Activated CD4-positive, alpha-beta memory T cell treated with anti-CD3 and anti-CD28 coated beads, Interleukin-2, amount 10 ng/mL, durations not matched to agents 7 days and 5 days (primary cell): ENCODE measurements at regions of chr1 and their contacts with region 1.

Region 1: DNA sequence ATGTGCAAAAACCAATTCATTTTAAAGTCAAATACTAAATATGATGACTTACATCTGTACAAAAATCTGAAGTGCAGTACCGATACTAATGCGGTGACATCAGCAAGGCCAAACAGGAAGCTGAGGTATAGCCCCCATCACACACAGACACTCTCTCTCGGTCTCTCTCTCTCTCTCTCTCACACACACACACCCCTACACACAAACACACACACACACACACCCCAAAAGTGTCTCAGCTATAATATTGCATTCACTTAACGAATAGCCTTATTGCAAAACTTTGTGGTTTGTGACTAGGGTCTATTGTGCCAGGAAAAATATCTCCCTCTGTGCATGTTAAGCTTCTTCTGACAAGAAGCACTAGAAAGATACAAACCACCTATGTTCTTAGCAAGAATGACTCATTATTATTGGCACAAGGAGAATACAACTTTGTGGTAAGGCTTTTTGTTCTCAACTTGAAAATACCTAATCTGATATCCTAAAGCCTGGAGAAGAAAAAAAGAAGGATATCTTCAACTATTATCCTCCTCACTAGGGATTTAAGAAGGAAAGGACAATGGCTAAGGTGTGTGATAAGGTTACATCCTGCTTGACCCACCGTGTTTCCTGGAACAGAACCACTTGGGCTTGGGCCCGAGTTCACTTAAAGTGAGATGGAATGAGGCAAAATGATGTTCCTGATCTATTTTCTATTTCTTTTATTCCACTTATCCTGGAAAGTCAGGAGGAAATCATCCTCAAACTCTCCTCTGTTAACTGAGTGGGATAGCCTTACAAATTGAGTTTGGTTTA is 107.1 kb downstream of the NIBAN1 start:
- DNase-seq: peak; percentile 76
- H3K4me3 Mint-ChIP-seq: peak overlapping the region; percentile 16
- H3K27ac Mint-ChIP-seq: peak overlapping the region; percentile 85
- H3K4me1 Mint-ChIP-seq: peaks cover 66% of the 10 kb centered on the region
- H3K27me3 Mint-ChIP-seq: no peaks in the 10 kb centered on the region

Region 2: GRCh38 chr1:184457500-184457899 is 409.7 kb before region 1 on chr1:
- CTCF ChIA-PET with region 1: no interaction called
- POLR2A ChIA-PET with region 1: no interaction called
- DNase-seq: no peak
- H3K4me3 Mint-ChIP-seq: no peak overlapping the region
- H3K27ac Mint-ChIP-seq: no peak overlapping the region
- H3K4me1 Mint-ChIP-seq: no peaks in the 10 kb centered on the region
- H3K27me3 Mint-ChIP-seq: peaks cover 10% of the 10 kb centered on the region

Region 3: GRCh38 chr1:184843732-184844495 is 23.3 kb before region 1 on chr1:
- CTCF ChIA-PET with region 1: interaction called, 3 read pairs
- POLR2A ChIA-PET with region 1: interaction called, 19 read pairs
- DNase-seq: peak; percentile 83
- H3K4me3 Mint-ChIP-seq: no peak overlapping the region
- H3K27ac Mint-ChIP-seq: peak overlapping the region; percentile 62
- H3K4me1 Mint-ChIP-seq: peaks cover 49% of the 10 kb centered on the region
- H3K27me3 Mint-ChIP-seq: no peaks in the 10 kb centered on the region

Region 4: DNA sequence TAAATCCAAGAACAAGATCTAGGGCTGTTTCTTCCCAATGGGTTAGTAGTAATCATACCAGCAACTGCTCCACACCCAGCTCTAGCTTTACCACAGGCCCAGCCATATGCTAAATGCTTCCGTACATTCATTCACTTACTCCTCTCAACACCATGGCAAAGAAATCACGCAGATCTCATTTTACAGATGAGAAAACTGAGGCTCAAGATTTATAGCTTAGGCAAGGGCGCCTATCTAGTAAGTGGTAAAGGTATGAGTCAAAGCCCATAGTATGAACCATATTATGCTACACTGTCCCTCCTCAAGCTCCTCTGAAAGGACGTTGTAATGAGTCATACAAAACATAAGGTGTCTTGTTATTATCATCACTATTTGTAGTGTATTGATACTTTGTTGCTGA is 24.9 kb after region 1 on chr1:
- CTCF ChIA-PET with region 1: interaction called, 9 read pairs
- POLR2A ChIA-PET with region 1: interaction called, 51 read pairs
- DNase-seq: peak; percentile 42
- H3K4me3 Mint-ChIP-seq: peak overlapping the region; percentile 6
- H3K27ac Mint-ChIP-seq: peak overlapping the region; percentile 82
- H3K4me1 Mint-ChIP-seq: peaks cover 61% of the 10 kb centered on the region
- H3K27me3 Mint-ChIP-seq: no peaks in the 10 kb centered on the region

Region 5: GRCh38 chr1:184915463-184916090 is 48.4 kb after region 1 on chr1:
- CTCF ChIA-PET with region 1: no interaction called
- POLR2A ChIA-PET with region 1: no interaction called
- DNase-seq: no peak
- H3K4me3 Mint-ChIP-seq: no peak overlapping the region
- H3K27ac Mint-ChIP-seq: no peak overlapping the region
- H3K4me1 Mint-ChIP-seq: peaks cover 23% of the 10 kb centered on the region
- H3K27me3 Mint-ChIP-seq: no peaks in the 10 kb centered on the region

Region 6: GRCh38 chr1:184935920-184936798 is 69.0 kb after region 1 on chr1:
- CTCF ChIA-PET with region 1: no interaction called
- POLR2A ChIA-PET with region 1: no interaction called
- DNase-seq: no peak
- H3K4me3 Mint-ChIP-seq: no peak overlapping the region
- H3K27ac Mint-ChIP-seq: no peak overlapping the region
- H3K4me1 Mint-ChIP-seq: peaks cover 8% of the 10 kb centered on the region
- H3K27me3 Mint-ChIP-seq: no peaks in the 10 kb centered on the region